ENCODE measurements at regions of chr1 and their contacts with region 1.

Region 1: GRCh38 chr1:153849487-153850185 is 73.1 kb downstream of the GATAD2B start:
- DNase-seq: peak; percentile 16 to 29 (median 27)
- H3K4me3 ChIP-seq: peak overlapping the region in 1 of 3 experiments; percentile 6
- H3K4me3 Mint-ChIP-seq: peak overlapping the region in 1 of 2 donors; percentile 47
- H3K27ac ChIP-seq: peak overlapping the region; percentile 31 to 66
- H3K27ac Mint-ChIP-seq: peak overlapping the region; percentile 71 to 85 (median 79)
- H3K4me1 ChIP-seq: peaks cover 23 to 27% of the 10 kb centered on the region in 2 donors
- H3K4me1 Mint-ChIP-seq: peaks cover 36% of the 10 kb centered on the region
- H3K27me3 ChIP-seq: no peaks in the 10 kb centered on the region
- H3K27me3 Mint-ChIP-seq: peaks cover 0 to 1% (median 0%) of the 10 kb centered on the region in 3 donors
- CTCF ChIP-seq: no peak

Region 2: DNA sequence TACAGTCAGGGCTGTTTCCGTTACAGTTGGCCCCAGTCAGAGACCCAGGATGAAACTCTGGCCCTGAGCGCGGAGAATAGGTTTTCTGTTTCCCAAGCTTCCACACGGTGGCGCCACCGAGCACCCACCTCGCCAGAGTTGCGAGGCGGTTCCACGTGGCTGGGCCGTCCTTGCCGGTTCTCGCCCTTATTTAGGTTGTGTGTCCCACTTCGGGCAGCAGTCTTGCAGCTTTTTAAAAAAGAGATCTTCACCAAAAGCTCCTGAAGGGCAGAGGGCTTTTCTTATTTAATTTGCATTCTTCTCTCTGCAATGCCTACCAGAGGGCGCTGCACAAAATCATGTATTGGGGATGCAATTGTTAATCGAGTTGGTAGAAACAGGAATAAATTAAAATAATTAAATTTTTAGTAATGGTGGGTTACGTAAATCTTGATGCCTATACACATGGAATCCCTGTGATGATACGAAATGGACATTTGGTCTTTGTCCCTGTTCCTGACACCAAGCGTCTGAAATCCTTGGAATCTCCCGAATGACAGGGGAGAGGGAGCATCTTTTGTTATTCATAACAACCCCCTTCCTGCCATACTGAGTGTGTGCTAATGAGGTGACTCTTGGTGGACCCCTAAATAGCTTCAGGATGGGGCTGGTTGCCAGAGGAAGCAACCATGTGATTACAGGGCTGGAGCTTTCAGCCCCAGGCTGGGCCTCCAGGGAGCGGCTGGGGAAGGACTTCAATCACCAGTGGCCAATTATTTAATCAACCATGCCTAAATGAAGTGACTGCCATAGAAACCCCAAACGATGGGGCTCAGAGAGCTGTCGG is 383.6 kb before region 1 on chr1:
- intact Hi-C with region 1: no loop called
- DNase-seq: peak; percentile 34 to 53 (median 40)
- H3K4me3 ChIP-seq: no peak overlapping the region
- H3K4me3 Mint-ChIP-seq: peak overlapping the region in 1 of 2 donors; percentile 37
- H3K27ac ChIP-seq: no peak overlapping the region
- H3K27ac Mint-ChIP-seq: no peak overlapping the region
- H3K4me1 ChIP-seq: peaks cover 0 to 9% of the 10 kb centered on the region in 2 donors
- H3K4me1 Mint-ChIP-seq: peaks cover 10% of the 10 kb centered on the region
- H3K27me3 ChIP-seq: peaks cover 0 to 2% of the 10 kb centered on the region in 2 donors
- H3K27me3 Mint-ChIP-seq: peaks cover 9 to 23% (median 13%) of the 10 kb centered on the region in 3 donors
- CTCF ChIP-seq: peak; percentile 88

Region 3: DNA sequence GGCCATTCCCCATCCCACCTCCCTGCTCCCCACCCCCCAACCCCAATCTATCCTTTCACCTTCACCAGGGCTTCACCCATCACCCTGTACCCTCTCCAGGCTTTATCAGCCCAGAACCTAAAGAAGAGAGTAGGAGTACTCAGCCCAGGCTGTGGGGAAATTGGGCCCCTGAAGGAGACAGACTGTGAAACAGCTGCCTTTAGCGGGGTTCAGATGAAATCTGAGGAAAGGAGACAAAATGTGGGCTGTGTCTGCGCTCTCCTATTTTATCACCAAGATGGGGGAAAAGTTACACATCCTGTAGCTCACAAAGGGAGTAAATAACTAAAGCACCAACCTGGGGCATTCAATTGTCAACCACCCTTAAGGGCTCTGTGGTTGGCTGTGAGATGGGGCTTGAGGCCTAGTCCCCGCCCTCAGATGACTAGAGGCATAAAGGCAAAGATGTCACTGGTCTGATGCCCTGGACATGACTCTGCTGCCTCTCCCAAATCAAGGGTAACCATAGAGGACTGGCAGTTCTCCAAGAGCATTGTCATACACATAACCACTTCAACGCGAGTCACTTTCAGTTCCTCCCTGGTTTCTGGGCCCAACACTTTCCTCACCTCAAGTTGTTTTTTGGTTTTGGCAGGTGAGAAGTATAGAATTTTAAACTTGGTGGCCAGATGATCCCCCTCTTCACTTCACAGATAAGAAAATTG is 44.4 kb before region 1 on chr1:
- intact Hi-C with region 1: loop called in 1 of 2 experiments (anchors 5 kb)
- DNase-seq: peak; percentile 98 to 99 (median 99)
- H3K4me3 ChIP-seq: peak overlapping the region in 1 of 3 experiments; percentile 24
- H3K4me3 Mint-ChIP-seq: peak overlapping the region in 1 of 2 donors; percentile 30
- H3K27ac ChIP-seq: peak overlapping the region; percentile 92 to 96
- H3K27ac Mint-ChIP-seq: peak overlapping the region; percentile 92 to 100 (median 98)
- H3K4me1 ChIP-seq: peaks cover 50 to 54% of the 10 kb centered on the region in 2 donors
- H3K4me1 Mint-ChIP-seq: peaks cover 54% of the 10 kb centered on the region
- H3K27me3 ChIP-seq: no peaks in the 10 kb centered on the region
- H3K27me3 Mint-ChIP-seq: peaks cover 0 to 7% (median 3%) of the 10 kb centered on the region in 3 donors
- CTCF ChIP-seq: no peak

Region 4: DNA sequence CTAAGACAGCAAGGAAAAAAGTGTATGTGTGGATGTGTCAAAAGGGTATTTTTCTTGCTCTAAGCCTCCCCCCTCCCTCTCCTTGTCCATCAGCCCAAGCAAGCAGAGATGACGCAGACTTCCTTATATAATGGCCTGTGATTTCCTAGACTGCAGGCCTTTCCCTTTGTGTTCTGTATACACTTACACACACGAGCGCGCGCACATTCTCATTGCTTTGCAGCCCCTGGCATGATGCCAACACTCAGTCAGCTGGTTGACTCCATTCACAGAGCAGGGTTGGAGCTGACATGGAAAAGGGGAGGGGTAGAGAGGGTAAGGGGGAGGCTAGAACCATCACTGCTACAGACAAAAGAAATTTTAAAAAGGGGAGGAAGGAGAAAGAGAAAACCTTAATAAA is 31.3 kb after region 1 on chr1:
- intact Hi-C with region 1: loop called in 1 of 2 experiments (anchors 5 kb)
- DNase-seq: peak; percentile 62 to 92 (median 68)
- H3K4me3 ChIP-seq: no peak overlapping the region
- H3K4me3 Mint-ChIP-seq: no peak overlapping the region
- H3K27ac ChIP-seq: peak overlapping the region in 1 of 2 donors; percentile 52
- H3K27ac Mint-ChIP-seq: no peak overlapping the region
- H3K4me1 ChIP-seq: peaks cover 18% of the 10 kb centered on the region in 2 donors
- H3K4me1 Mint-ChIP-seq: peaks cover 2% of the 10 kb centered on the region
- H3K27me3 ChIP-seq: no peaks in the 10 kb centered on the region
- H3K27me3 Mint-ChIP-seq: peaks cover 0 to 3% (median 0%) of the 10 kb centered on the region in 3 donors
- CTCF ChIP-seq: no peak